KBM-7 (cell line): ENCODE measurements at regions of chr6 and their contacts with region 1.

Region 1: DNA sequence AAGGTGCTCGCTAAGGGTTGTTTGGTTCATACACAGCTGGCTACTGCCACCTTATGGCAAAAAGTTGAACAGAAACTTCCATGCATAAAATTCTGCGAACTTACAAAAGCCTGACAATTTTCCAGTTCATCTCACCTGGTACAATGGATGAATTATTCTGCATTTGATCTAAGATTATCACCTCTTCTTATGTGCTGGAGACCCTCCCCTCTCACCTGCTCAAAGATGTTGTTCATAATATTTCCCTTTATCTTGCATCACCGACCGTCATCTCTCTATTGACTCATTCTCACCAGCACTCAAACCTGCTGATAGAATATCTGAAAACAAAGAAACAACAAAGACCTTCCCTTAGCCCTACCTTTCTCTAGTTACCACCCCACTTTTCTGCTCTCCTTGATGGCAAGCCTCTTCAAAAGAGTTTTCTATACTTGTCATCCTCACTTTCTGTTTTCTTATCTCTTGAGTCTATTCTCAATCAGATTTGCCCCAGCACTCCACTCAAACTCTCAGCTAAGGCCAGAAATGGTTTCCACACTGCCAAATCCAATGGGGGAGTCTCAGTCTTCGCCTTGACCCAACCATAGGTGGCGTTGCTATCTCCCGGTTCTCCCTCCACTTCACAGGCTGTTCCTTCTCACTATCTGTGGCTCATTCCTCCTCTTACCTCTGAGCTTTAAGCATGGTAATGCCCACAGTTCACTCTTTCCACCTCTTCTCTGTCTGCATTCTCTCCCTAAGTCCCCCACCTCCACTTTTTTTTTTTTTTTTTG is 25.8 kb downstream of the SNRNP48 start:
- DNase-seq: peak; percentile 77

Region 2: GRCh38 chr6:7085911-7086310 is 529.9 kb before region 1 on chr6:
- in situ Hi-C with region 1: no loop called
- DNase-seq: no peak

Region 3: DNA sequence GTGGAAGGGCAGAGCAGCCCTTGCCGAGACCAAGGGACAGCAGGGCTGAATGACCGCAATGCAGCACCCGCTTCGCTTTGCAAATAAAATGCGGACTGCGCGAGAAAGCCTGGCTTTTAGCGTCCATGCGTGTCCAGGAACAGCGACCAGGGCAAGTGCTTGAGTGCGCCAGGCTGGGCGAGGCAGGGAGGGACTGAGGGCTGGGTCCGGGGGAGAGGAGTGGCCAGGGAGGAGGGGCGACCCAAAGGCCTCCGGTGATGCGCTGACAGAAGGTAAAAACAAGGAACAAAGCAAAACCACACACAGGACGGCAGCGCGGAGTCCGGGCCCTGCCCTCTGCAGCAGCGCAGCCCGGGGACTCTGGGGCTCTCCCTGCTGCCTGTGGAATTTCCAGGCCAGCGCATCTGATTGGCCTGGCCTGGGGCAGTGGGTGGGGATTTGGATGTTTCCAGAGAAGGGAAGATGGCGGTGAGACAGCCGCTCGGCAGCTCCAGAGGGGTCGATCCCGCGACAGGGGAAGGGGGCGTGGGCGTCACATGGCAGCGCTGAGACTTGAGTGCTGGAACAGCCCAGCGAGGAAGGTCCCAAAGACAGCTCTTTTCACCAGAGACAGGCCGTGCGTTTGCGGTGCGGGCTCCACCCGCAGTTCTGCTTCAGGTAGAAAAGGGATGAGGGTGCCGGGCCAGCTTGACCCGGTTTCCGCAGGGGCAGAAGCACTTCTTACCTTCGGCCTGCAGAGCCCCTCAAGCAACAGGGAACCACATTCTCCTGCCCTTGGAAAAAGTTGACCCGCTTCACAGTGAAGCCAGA is 354.6 kb before region 1 on chr6:
- in situ Hi-C with region 1: loop called (anchors 25 kb)
- DNase-seq: peak; percentile 98

Region 4: DNA sequence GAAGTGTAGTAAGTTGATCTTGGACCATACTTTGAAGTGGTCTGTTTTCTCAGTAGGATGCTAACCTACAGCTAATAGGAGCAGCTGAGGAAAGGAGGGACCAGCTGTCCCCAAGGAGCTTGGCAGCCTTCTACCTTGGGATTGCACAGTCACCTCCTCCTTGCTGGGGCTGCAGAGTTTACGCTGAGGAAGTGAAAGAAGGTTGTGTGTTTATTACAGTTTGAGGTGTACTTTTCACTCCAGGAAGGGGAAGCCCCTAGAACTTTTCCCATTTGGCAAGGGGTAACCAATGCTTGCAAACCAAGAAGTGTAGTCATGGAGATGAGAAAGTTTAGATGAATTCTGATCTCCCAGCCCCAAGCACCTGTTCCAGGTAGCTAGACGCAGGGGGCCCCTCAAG is 168.9 kb after region 1 on chr6:
- in situ Hi-C with region 1: no loop called
- DNase-seq: peak; percentile 3